Activated CD4-positive, alpha-beta memory T cell treated with anti-CD3 and anti-CD28 coated beads for 36 hours (primary cell): ENCODE measurements at regions of chr6 and their contacts with region 1.

Region 1: GRCh38 chr6:2952557-2953095 is 18.7 kb downstream of the SERPINB6 start:
- DNase-seq: peak; percentile 65
- H3K4me3 Mint-ChIP-seq: no peak overlapping the region
- H3K27ac Mint-ChIP-seq: no peak overlapping the region
- H3K4me1 Mint-ChIP-seq: no peaks in the 10 kb centered on the region
- H3K27me3 Mint-ChIP-seq: no peaks in the 10 kb centered on the region

Region 2: GRCh38 chr6:2611090-2611489 is 341.5 kb before region 1 on chr6:
- CTCF ChIA-PET with region 1: no interaction called
- POLR2A ChIA-PET with region 1: no interaction called
- intact Hi-C with region 1: no loop called
- DNase-seq: no peak
- H3K4me3 Mint-ChIP-seq: no peak overlapping the region
- H3K27ac Mint-ChIP-seq: no peak overlapping the region
- H3K4me1 Mint-ChIP-seq: no peaks in the 10 kb centered on the region
- H3K27me3 Mint-ChIP-seq: peaks cover 14% of the 10 kb centered on the region

Region 3: GRCh38 chr6:2971420-2972218 is 19.0 kb after region 1 on chr6 and contains the start of gene SERPINB6:
- CTCF ChIA-PET with region 1: interaction called, 12 read pairs
- POLR2A ChIA-PET with region 1: no interaction called
- intact Hi-C with region 1: no loop called
- DNase-seq: peak; percentile 51
- H3K4me3 Mint-ChIP-seq: peak within 1 kb of the TSS; percentile 80
- H3K27ac Mint-ChIP-seq: peak within 1 kb of the TSS; percentile 87
- H3K4me1 Mint-ChIP-seq: peaks cover 38% of the 10 kb centered on the region
- H3K27me3 Mint-ChIP-seq: peaks cover 5% of the 10 kb centered on the region
- total RNA-seq, gene SERPINB6: 59.0 to 64.7 TPM

Region 4: DNA sequence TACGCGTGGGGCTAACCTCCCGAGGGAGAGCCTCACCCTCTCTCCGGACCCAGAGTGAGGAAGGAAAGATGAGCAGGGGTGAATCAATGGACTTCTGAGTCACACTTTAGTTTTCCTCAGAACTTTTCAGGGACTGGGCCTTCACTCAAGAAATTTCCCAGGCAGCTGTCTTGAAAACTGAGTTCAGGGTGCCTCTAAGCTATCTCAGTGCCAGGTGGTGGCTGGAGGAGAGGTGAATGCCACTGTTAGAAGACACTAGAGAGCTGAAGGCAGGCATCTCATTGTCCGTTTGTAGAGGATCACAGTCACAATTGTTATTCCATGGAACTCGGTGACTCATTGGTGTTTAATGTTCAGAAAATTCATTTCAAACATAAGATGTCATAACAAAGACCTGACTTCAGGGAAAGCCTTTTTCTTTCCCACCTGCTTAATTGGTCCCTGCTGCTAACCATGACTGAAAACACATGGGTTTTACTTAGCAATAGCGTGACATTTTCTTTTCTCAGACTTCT is 24.0 kb after region 1 on chr6:
- CTCF ChIA-PET with region 1: interaction called, 12 read pairs
- POLR2A ChIA-PET with region 1: no interaction called
- intact Hi-C with region 1: no loop called
- DNase-seq: peak; percentile 33
- H3K4me3 Mint-ChIP-seq: no peak overlapping the region
- H3K27ac Mint-ChIP-seq: peak overlapping the region; percentile 88
- H3K4me1 Mint-ChIP-seq: peaks cover 40% of the 10 kb centered on the region
- H3K27me3 Mint-ChIP-seq: peaks cover 8% of the 10 kb centered on the region

Region 5: DNA sequence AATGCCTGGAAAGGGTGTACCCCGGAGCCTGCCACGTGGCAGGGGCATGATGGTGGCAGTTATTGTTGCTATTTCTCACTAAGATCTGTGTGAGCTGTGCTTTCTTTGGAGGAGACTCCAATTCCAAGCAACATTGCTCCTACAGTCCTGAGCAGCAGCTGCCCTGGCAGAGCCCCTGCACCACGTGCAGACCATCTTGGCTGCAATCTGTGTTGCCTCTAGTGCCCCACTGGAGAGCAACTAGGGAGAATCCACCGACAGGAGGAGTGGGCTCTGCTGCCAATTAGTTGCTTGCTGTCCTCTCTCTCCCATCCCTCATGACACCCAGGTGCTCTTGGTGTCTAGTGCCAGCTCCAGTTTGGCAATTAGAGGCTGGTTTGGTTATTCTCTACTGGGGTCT is 682.9 kb after region 1 on chr6:
- CTCF ChIA-PET with region 1: no interaction called
- POLR2A ChIA-PET with region 1: no interaction called
- intact Hi-C with region 1: no loop called
- DNase-seq: no peak
- H3K4me3 Mint-ChIP-seq: no peak overlapping the region
- H3K27ac Mint-ChIP-seq: no peak overlapping the region
- H3K4me1 Mint-ChIP-seq: no peaks in the 10 kb centered on the region
- H3K27me3 Mint-ChIP-seq: peaks cover 16% of the 10 kb centered on the region